ENCODE measurements at regions of chr17 and their contacts with region 1.

Region 1: DNA sequence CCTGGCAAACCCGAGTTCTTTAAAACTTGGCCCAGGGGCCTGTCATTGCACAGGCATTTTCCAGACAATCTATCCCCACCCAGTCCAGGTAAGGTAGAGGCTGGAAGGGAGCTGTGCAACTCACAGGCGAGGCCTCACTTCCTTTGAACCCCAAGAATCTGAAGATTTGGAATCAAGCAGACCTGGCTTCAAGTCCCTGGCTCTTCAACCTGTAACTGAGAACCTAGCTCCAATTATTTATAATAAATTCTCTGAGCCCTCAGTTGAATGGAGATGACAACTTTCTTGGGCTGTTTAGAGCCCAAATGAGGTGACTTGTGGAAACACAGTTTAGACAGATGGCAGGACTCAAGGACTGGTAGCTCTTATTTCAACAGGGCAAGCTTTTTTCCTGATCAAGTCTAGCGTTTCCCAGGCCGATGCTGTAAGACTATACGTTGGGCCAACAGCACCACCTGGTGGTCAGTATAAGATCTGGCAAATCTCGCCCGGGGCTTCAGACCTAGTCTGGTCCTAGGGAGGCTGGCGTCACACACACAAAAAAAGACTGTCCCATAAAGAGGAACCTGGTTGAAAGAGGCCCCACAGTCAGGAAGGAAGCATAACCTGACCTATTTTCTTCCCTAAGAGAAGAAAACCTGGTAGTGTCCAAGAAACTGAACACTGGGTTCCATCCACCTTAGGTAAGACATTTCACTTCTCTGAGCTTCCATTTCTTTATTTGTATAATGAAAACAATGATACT is 117.9 kb downstream of the C17orf67 start:
- DNase-seq: peak; percentile 91
- H3K4me3 Mint-ChIP-seq: no peak overlapping the region
- H3K27ac Mint-ChIP-seq: no peak overlapping the region
- H3K4me1 Mint-ChIP-seq: peaks cover 9% of the 10 kb centered on the region
- H3K27me3 Mint-ChIP-seq: no peaks in the 10 kb centered on the region

Region 2: GRCh38 chr17:56319517-56319916 is 396.3 kb before region 1 on chr17:
- CTCF ChIA-PET with region 1: interaction called, 3 read pairs
- intact Hi-C with region 1: loop called (anchors 10 kb)
- DNase-seq: no peak
- H3K4me3 Mint-ChIP-seq: no peak overlapping the region
- H3K27ac Mint-ChIP-seq: no peak overlapping the region
- H3K4me1 Mint-ChIP-seq: no peaks in the 10 kb centered on the region
- H3K27me3 Mint-ChIP-seq: peaks cover 4% of the 10 kb centered on the region

Region 3: DNA sequence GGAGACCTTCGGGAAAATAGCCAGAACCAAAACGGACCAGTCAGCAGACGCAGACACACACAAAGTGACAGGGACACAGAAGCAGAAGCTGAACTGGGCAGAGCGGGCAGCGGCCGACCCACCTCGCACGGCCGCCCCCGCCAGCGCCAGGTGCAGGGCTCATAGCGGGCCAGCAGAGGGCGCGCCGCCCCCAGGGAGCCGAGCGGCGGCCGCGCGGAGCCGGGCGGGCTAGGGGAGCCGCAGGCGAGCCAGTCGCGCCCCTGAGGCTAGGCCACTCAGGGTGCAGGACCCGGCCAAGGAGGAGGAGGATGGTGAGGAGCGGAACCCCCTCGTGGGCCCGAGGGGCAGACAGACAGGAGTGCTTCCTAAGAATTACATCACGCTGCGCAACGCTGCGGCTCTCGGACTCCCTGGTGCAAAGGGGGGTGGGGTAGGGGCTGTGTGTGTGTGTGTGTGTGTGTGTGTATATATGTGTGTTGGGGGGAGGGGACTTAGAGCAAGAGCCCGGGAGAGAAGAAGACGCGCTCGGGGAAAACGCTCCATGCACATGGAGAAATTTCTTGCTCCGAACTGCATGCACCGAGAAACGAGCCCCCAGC is 123.2 kb before region 1 on chr17:
- CTCF ChIA-PET with region 1: interaction called, 66 read pairs
- intact Hi-C with region 1: loop called (anchors 1 kb)
- DNase-seq: peak; percentile 66
- H3K4me3 Mint-ChIP-seq: peak overlapping the region; percentile 79
- H3K27ac Mint-ChIP-seq: no peak overlapping the region
- H3K4me1 Mint-ChIP-seq: peaks cover 17% of the 10 kb centered on the region
- H3K27me3 Mint-ChIP-seq: no peaks in the 10 kb centered on the region

Region 4: DNA sequence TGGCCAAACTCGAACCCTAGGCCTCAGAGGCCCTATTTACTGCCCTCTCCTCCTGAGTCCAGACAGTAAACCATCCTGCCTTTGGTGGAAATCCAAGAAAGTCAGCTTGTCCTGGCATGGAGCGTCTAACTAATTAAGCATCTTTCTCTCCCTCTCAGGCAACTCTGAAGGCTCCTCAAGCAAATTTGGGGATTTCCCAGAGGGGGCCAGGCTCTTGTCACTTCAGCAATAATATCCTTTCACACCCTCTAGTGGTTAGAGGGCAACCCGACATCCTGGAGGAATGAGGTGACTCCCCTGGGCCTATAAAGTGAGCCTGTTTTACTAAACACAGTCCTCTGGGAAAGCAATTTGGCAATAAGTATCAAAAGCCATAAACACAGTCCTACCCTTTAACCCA is 61.9 kb before region 1 on chr17:
- CTCF ChIA-PET with region 1: interaction called, 9 read pairs
- intact Hi-C with region 1: loop called (anchors 1 kb)
- DNase-seq: peak; percentile 90
- H3K4me3 Mint-ChIP-seq: no peak overlapping the region
- H3K27ac Mint-ChIP-seq: no peak overlapping the region
- H3K4me1 Mint-ChIP-seq: peaks cover 5% of the 10 kb centered on the region
- H3K27me3 Mint-ChIP-seq: no peaks in the 10 kb centered on the region

Region 5: GRCh38 chr17:56690486-56691291 is 25.1 kb before region 1 on chr17:
- CTCF ChIA-PET with region 1: interaction called, 18 read pairs
- intact Hi-C with region 1: no loop called
- DNase-seq: no peak
- H3K4me3 Mint-ChIP-seq: no peak overlapping the region
- H3K27ac Mint-ChIP-seq: no peak overlapping the region
- H3K4me1 Mint-ChIP-seq: no peaks in the 10 kb centered on the region
- H3K27me3 Mint-ChIP-seq: no peaks in the 10 kb centered on the region

Region 6: GRCh38 chr17:56735842-56736241 is 20.1 kb after region 1 on chr17:
- CTCF ChIA-PET with region 1: interaction called, 12 read pairs
- intact Hi-C with region 1: no loop called
- DNase-seq: no peak
- H3K4me3 Mint-ChIP-seq: no peak overlapping the region
- H3K27ac Mint-ChIP-seq: no peak overlapping the region
- H3K4me1 Mint-ChIP-seq: no peaks in the 10 kb centered on the region
- H3K27me3 Mint-ChIP-seq: no peaks in the 10 kb centered on the region

Region 7: GRCh38 chr17:56779898-56780733 is 64.3 kb after region 1 on chr17:
- CTCF ChIA-PET with region 1: interaction called, 69 read pairs
- intact Hi-C with region 1: loop called (anchors 1 kb)
- DNase-seq: peak; percentile 89
- H3K4me3 Mint-ChIP-seq: peak overlapping the region; percentile 83
- H3K27ac Mint-ChIP-seq: peak overlapping the region; percentile 91
- H3K4me1 Mint-ChIP-seq: peaks cover 29% of the 10 kb centered on the region
- H3K27me3 Mint-ChIP-seq: no peaks in the 10 kb centered on the region

Measured in activated naive CD4-positive, alpha-beta T cell treated with anti-CD3 and anti-CD28 coated beads for 36 hours (primary cell).